Activated T-helper 1 cell treated with anti-CD3 and anti-CD28 coated beads, Interleukin-12 subunit alpha, Interleukin-12 subunit beta, Interleukin-2, Interleukin-4 antibody, amounts not matched to agents 30 ng/mL and 10 ng/mL and 1 ng/mL, durations not matched to agents 14 hours and 24 hours and 36 hours (primary cell): ENCODE measurements at regions of chr11 and their contacts with region 1.

Region 1: GRCh38 chr11:128512474-128512996 is 74.8 kb downstream of the ETS1 start:
- DNase-seq: peak; percentile 40
- H3K4me3 Mint-ChIP-seq: peak overlapping the region; percentile 96
- H3K27ac Mint-ChIP-seq: peak overlapping the region; percentile 98
- H3K4me1 Mint-ChIP-seq: peaks cover 100% of the 10 kb centered on the region
- H3K27me3 Mint-ChIP-seq: no peaks in the 10 kb centered on the region

Region 2: DNA sequence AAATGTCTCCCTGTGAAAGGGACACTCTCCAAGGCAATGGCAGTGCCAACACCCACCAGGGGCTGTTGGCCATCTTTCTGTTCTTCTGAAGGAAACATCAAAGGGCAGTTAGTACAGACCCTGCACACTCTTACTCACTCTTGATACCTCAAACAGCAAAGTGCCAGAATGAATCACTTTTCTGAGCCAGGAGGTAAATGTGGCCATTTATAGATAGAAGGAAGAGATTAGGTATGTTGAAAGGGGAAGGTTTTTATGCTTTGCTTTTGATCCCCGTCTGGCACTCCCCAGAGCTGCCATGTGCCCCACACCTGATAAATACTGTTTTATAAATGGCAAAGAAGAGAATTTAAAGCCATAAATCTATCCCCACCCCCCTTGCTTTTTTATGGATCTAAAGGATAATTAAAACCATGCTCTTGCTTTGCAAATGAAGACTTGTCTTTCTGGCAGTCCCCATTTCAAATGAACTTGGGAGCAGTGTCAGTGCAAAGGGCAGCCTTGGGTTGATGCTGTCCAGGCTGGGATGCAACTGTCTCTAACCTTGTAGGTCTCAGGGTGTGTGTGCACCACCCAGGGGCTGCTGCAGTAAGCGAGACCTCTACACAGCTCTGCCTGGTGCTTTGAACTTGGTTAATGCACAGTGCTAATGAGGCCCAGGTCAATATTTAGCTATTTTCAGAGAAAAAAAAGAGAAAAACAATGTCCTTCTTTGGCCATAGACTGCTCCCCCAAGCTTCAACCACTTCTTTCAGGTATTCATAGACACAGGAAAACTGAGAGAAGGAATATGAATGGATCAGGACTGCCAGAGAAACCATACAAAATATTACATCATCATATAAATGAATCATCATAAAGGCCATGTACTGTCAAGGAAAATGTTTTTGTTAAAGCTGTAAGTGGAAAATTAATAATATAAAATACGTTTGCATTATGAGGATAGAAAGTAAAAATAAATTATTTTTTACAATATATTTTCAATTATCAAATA is 132.7 kb before region 1 on chr11:
- intact Hi-C with region 1: no loop called
- DNase-seq: peak; percentile 9
- H3K4me3 Mint-ChIP-seq: no peak overlapping the region
- H3K27ac Mint-ChIP-seq: peak overlapping the region; percentile 45
- H3K4me1 Mint-ChIP-seq: peaks cover 28% of the 10 kb centered on the region
- H3K27me3 Mint-ChIP-seq: no peaks in the 10 kb centered on the region

Region 3: GRCh38 chr11:128482512-128483191 is 29.9 kb before region 1 on chr11:
- intact Hi-C with region 1: loop called (anchors 1 kb)
- DNase-seq: no peak
- H3K4me3 Mint-ChIP-seq: peak overlapping the region; percentile 80
- H3K27ac Mint-ChIP-seq: peak overlapping the region; percentile 95
- H3K4me1 Mint-ChIP-seq: peaks cover 96% of the 10 kb centered on the region
- H3K27me3 Mint-ChIP-seq: no peaks in the 10 kb centered on the region

Region 4: GRCh38 chr11:128501632-128502549 is 10.6 kb before region 1 on chr11:
- intact Hi-C with region 1: loop called (anchors 1 kb)
- DNase-seq: no peak
- H3K4me3 Mint-ChIP-seq: peak overlapping the region; percentile 96
- H3K27ac Mint-ChIP-seq: peak overlapping the region; percentile 98
- H3K4me1 Mint-ChIP-seq: peaks cover 98% of the 10 kb centered on the region
- H3K27me3 Mint-ChIP-seq: no peaks in the 10 kb centered on the region